A549 (cell line): ENCODE measurements at regions of chr11 and their contacts with region 1.

Region 1: DNA sequence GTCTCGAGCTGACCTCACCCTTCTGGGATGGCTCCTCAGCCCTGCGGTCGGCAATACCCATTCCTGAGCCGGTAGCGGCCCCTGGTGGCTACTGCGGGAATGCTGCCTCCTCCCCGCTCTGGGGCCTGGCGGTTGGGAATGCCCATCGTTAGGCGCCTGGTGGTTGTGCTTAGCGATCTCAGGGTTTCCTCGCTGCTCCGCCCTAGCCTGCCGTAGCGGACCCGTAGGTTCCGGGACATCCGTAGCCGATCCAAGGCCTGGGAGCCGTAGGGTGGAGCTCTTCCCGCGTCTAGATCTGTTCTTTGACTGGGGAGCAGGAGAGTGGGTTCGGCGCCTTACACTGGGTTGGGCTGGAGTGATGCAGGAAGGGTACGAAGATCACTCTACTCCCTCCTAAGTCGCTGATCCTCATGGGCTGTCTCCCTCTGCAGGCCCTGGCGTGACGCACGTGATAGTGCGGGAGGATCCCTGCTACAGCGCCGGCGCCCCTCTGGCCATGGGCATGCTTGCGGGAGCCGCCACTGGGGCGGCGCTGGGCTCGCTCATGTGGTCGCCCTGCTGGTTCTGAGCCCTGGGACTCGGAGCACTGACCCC is 14.8 kb downstream of the PLEKHB1 start:
- DNase-seq: peak; percentile 78 to 99
- ATAC-seq: peak; percentile 85 to 98
- H3K4me3 ChIP-seq: peak overlapping the region; percentile 21; the same call in 2 of the 3 replicates
- H3K27ac ChIP-seq: peak overlapping the region; percentile 42 to 62; a peak in 5 of 6 replicates
- H3K4me1 ChIP-seq: no peaks in the 10 kb centered on the region
- CTCF ChIP-seq: peak; percentile 93
- EP300 ChIP-seq: no peak
- POLR2A ChIP-seq: no peak
- RAD21 ChIP-seq: peak; percentile 98 to 99

Region 2: DNA sequence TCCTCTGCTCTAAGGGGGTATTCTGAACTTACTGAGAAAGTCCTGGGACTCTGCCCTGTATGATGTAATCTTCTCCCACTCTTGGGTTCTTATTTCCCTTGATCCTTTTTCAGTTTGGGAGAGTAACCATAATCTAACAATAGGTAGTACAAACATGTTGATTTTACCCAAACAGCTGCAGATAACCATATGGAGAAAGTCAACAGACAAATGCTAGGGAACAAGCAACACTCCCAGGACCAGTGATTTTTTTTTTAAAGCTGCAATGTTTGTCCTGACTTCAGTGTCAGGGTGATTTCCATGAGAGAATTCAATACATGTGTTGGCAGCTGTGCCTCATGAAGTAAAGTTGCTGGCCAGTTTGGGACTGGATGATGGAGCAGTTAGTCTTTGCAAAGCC is 675.5 kb before region 1 on chr11:
- CTCF ChIA-PET with region 1: no interaction called
- POLR2A ChIA-PET with region 1: no interaction called
- DNase-seq: no peak
- ATAC-seq: no peak
- H3K4me3 ChIP-seq: no peak overlapping the region
- H3K27ac ChIP-seq: 0 out of 6 replicates have a peak overlapping the region, but pooled peaks of 1 of the 2 experiments have one; percentile 10
- H3K4me1 ChIP-seq: no peaks in the 10 kb centered on the region
- CTCF ChIP-seq: no peak
- EP300 ChIP-seq: no peak
- POLR2A ChIP-seq: no peak
- RAD21 ChIP-seq: no peak

Region 3: GRCh38 chr11:73350908-73351636 is 310.1 kb before region 1 on chr11:
- CTCF ChIA-PET with region 1: interaction called, 60 read pairs
- POLR2A ChIA-PET with region 1: no interaction called
- DNase-seq: peak; percentile 73 to 92
- ATAC-seq: peak; percentile 47 to 80; a peak in 5 of 6 replicates
- H3K4me3 ChIP-seq: no peak overlapping the region
- H3K27ac ChIP-seq: no peak overlapping the region
- H3K4me1 ChIP-seq: no peaks in the 10 kb centered on the region
- CTCF ChIP-seq: peak; percentile 94
- EP300 ChIP-seq: no peak
- POLR2A ChIP-seq: no peak
- RAD21 ChIP-seq: peak; percentile 72 to 73

Region 4: GRCh38 chr11:73384872-73385689 is 276.1 kb before region 1 on chr11:
- CTCF ChIA-PET with region 1: interaction called, 10 read pairs
- POLR2A ChIA-PET with region 1: no interaction called
- DNase-seq: no peak
- ATAC-seq: peak in 1 of 2 experiments; percentile 9; a peak in 3 of 6 replicates
- H3K4me3 ChIP-seq: no peak overlapping the region
- H3K27ac ChIP-seq: peak overlapping the region; percentile 43 to 80; a peak in 5 of 6 replicates
- H3K4me1 ChIP-seq: peaks cover 76% of the 10 kb centered on the region
- CTCF ChIP-seq: no peak
- EP300 ChIP-seq: no peak
- POLR2A ChIP-seq: no peak
- RAD21 ChIP-seq: no peak

Region 5: DNA sequence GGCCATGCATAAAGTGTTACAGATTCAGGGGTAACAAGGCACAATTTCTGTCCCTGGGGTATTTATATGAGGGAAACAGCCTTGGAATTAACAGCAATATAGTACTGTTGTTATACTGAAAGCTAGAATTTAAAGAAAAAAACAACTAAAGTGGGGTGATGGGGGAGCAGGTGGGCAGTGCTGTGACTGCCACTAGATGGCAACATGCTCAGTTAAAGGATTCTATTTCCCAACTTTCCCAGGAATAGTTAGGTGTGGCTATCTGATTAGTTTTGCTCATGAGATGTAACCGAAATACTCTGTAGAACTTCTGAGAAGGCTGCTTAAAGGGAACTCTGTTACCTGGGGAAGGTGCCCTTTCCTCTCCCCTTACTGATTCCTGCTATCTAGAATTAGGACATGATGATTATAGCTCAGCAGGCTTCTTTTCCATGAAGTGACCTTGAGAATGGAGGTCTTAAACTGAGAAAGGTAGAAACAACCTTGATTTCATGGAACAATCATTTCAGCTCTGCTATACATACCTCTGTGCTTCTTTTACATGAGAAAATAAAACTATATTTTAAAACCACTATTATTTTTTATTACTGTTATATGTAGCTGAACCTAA is 182.3 kb before region 1 on chr11:
- CTCF ChIA-PET with region 1: interaction called, 53 read pairs
- POLR2A ChIA-PET with region 1: no interaction called
- DNase-seq: peak; percentile 51 to 61
- ATAC-seq: peak; percentile 85 to 93
- H3K4me3 ChIP-seq: no peak overlapping the region
- H3K27ac ChIP-seq: no peak overlapping the region
- H3K4me1 ChIP-seq: no peaks in the 10 kb centered on the region; the same call in 2 of the 3 replicates
- CTCF ChIP-seq: peak; percentile 89
- EP300 ChIP-seq: no peak
- POLR2A ChIP-seq: no peak
- RAD21 ChIP-seq: peak; percentile 61 to 68

Region 6: GRCh38 chr11:73519266-73519665 is 141.9 kb before region 1 on chr11:
- CTCF ChIA-PET with region 1: no interaction called
- POLR2A ChIA-PET with region 1: no interaction called
- DNase-seq: no peak
- ATAC-seq: no peak
- H3K4me3 ChIP-seq: no peak overlapping the region
- H3K27ac ChIP-seq: no peak overlapping the region
- H3K4me1 ChIP-seq: peaks cover 13% of the 10 kb centered on the region
- CTCF ChIP-seq: no peak
- EP300 ChIP-seq: no peak
- POLR2A ChIP-seq: no peak
- RAD21 ChIP-seq: no peak

Region 7: GRCh38 chr11:73633999-73634398 is 27.1 kb before region 1 on chr11:
- CTCF ChIA-PET with region 1: interaction called, 37 read pairs
- POLR2A ChIA-PET with region 1: no interaction called
- DNase-seq: no peak
- ATAC-seq: no peak
- H3K4me3 ChIP-seq: no peak overlapping the region
- H3K27ac ChIP-seq: no peak overlapping the region
- H3K4me1 ChIP-seq: no peaks in the 10 kb centered on the region
- CTCF ChIP-seq: no peak
- EP300 ChIP-seq: no peak
- POLR2A ChIP-seq: no peak
- RAD21 ChIP-seq: no peak

Region 8: DNA sequence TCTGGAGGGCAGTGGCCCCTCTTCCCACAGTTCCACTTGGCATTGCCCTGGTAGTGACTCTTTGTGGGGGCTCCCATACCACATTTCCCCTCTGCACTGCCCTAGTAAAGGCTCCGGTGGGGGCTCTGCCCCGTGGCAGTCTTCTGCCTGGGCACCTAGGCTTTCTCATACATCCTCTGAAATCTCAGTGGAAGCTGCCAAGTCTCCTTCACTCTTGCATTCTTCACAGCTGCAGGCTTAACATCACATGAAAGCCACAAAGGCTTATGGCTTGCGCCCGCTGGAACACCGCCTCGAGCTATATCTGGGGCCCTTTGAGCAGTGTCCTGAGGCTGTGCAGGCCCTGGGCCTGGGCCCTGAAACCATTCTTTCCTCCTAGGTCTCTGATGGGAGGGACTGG is 10.6 kb after region 1 on chr11:
- CTCF ChIA-PET with region 1: interaction called, 65 read pairs
- POLR2A ChIA-PET with region 1: no interaction called
- DNase-seq: no peak
- ATAC-seq: peak; percentile 8 to 40; a peak in 3 of 6 replicates
- H3K4me3 ChIP-seq: no peak overlapping the region
- H3K27ac ChIP-seq: no peak overlapping the region
- H3K4me1 ChIP-seq: no peaks in the 10 kb centered on the region
- CTCF ChIP-seq: no peak
- EP300 ChIP-seq: no peak
- POLR2A ChIP-seq: no peak
- RAD21 ChIP-seq: no peak

Region 9: DNA sequence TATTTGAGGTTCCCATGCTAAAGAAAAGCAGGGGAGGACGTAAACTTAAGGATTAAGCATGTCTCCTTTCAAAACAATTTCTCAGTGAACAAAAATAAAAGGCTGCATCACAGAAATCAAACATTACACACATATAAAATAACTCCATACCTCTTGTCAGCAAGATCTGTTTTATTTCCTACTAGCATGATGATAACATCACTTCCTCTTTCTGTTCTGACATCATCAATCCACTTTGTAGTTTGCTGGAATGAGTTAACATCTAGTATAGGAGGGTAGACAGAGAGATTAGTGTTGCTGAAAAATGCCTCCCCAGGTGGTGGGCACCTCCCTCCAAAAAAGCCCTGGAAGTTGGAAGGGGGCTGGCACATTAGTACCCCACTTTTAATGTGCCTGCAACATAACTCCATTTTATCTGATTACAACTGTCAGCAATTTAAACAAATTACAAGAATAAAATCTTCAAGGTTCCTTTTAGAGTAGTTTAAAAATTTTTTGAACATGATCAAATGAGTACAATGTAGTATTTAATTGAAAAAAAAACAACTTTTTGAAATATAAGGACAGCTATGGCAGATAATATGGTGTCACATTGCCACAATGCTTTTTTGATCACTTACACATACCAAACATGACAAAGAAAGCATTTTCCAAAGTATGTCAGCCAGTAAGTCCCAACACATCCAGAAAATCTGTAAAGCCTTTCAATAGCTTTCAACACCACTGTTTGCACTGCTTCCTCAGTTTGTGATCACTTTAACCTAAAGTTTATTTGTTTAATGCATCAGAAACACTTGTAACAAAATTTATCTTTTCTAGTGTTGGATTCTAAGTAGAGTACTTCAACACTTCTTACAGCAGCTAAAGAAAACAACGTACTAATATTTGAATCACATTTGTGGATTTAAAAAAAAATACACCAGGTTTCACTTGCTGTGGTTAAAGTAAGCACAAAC is 55.2 kb after region 1 on chr11:
- CTCF ChIA-PET with region 1: no interaction called
- POLR2A ChIA-PET with region 1: no interaction called
- DNase-seq: peak in 1 of 2 experiments; percentile 18
- ATAC-seq: no peak
- H3K4me3 ChIP-seq: no peak overlapping the region
- H3K27ac ChIP-seq: no peak overlapping the region
- H3K4me1 ChIP-seq: peaks cover 10% of the 10 kb centered on the region
- CTCF ChIP-seq: no peak
- EP300 ChIP-seq: no peak
- POLR2A ChIP-seq: no peak
- RAD21 ChIP-seq: no peak